ENCODE measurements at regions of chr15 and their contacts with region 1.

Region 1: DNA sequence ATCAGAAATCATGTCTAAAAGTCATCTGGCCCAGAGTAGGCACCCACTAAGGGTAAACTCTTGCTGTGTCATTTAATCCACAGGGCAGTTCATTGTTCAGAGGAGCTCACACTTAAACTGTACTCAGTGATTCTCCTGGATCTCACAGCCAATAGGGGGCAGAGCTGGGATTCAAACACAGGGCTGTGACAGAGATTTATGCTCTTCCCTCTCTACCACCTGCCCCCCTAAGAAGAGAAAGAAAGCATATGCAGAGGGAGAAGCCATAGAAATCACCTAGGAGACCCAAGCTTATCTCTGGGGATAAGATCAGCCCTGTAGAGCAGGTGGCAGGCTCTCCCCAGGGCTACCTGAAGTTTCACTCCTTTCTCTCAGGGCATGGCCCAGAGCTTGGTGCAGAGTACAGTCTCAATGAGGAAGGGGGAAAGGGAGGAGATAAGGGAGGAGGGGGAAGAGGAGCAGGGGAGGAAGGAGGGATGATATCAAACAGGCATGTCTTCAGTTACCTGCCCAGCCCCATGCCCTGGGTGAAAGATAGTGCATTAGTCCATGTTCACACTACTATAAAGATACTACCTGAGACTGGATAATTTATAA is 51.8 kb upstream of the ADPGK start:
- DNase-seq: peak in 1 of 2 donors; percentile 39
- ATAC-seq: peak in 1 of 2 donors; percentile 24
- H3K4me3 ChIP-seq: no peak overlapping the region
- H3K27ac ChIP-seq: peak overlapping the region; percentile 84 to 93 (median 89)
- H3K4me1 ChIP-seq: peaks cover 28 to 57% of the 10 kb centered on the region in 2 donors
- H3K27me3 ChIP-seq: no peaks in the 10 kb centered on the region
- CTCF ChIP-seq: peak in 4 of 5 experiments; percentile 23 to 50 (median 38)
- POLR2A ChIP-seq: no peak

Region 2: DNA sequence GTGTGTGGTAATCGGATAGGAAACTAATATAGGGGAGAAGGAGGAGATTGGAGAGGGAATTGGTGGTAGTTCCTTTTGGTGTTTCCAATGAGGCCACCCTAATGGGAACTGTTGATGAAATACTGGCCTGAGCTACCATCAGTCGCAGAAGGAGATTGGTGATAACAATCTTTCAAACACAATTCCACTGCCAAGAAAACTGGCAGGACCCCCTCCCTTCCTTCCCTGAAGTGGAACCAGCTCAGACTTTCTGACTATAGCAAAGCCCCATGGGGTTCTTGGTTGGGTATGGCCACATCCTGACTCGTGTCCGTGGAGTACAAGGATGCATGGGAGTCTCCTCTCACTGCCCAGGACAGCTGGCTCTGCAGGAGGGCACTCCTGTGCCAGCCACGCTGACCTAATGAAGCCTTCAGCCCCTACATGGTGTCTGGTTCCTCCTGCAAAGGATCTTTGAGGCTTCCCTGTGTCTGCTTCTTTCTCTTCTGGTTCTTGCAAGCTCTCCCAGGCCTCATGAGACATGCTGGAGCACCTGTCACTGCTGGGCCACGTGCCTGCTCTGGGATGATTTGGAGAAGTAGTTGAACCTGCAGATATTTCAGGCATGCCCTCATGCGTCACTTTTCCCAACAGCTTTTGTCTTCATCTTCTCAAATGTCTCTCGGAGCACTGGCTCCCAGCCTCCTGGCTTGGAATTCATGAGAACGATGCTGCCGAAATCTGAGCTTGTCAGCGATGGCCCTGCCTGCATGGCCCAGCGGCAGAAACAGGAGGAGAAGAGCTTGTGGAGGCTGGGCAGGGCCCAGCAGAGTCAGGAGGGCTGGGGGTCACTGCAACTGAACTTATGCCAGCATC is 38.2 kb after region 1 on chr15:
- in situ Hi-C with region 1: loop called in 1 of 4 experiments (anchors 5 kb)
- intact Hi-C with region 1: loop called (anchors 1 kb)
- DNase-seq: peak; percentile 94 to 99
- ATAC-seq: peak; percentile 82 to 84
- H3K4me3 ChIP-seq: peak overlapping the region in 1 of 4 donors; percentile 1
- H3K27ac ChIP-seq: peak overlapping the region; percentile 87 to 93 (median 90)
- H3K4me1 ChIP-seq: peaks cover 56 to 62% of the 10 kb centered on the region in 2 donors
- H3K27me3 ChIP-seq: no peaks in the 10 kb centered on the region
- CTCF ChIP-seq: no peak
- POLR2A ChIP-seq: peak; percentile 32 to 42

Region 3: DNA sequence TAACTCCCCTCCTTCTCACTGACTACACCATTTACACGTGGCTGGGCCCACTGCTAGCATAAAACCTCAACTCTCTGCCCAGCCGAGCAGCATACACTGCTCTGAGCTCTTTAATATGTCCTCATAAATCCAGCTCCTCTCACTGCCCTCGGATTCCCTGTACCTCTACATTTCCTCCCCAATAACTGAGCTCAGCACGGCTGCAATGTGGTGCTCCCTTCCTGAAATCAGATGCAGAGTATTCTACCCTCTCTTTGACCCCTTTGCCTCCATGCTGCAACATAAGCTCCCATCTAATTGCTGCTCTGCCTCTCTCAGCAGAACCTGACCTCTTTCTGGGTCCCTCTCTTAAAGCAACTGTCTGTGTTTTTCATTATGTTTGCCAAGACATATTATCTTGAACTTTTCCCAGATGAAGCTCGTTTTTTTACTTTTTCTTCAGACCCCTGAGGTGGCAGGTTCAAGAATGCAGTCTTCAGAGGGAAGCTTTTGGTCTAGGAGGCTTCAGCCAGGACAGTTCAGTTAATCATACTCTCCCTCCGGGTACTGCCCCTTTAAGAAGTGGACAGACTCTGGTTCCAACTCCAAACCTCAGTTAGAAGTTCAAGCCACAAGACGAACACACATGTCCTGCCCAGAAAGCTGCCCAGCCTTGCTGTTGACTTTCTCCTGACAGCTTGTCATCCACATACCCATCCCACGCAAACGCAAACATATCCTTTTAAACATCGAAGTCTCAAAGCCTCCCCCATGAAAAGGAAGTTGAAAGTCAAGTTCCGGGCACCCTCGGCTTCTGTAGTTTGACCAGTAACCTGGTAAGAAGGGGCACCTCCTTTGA is 135.8 kb after region 1 on chr15:
- in situ Hi-C with region 1: no loop called
- intact Hi-C with region 1: loop called (anchors 5 kb)
- DNase-seq: no peak
- ATAC-seq: peak; percentile 79 to 87
- H3K4me3 ChIP-seq: peak overlapping the region; percentile 36 to 54 (median 46)
- H3K27ac ChIP-seq: peak overlapping the region; percentile 71 to 80 (median 74)
- H3K4me1 ChIP-seq: peaks cover 32 to 42% of the 10 kb centered on the region in 2 donors
- H3K27me3 ChIP-seq: no peaks in the 10 kb centered on the region
- CTCF ChIP-seq: no peak
- POLR2A ChIP-seq: no peak

Region 4: DNA sequence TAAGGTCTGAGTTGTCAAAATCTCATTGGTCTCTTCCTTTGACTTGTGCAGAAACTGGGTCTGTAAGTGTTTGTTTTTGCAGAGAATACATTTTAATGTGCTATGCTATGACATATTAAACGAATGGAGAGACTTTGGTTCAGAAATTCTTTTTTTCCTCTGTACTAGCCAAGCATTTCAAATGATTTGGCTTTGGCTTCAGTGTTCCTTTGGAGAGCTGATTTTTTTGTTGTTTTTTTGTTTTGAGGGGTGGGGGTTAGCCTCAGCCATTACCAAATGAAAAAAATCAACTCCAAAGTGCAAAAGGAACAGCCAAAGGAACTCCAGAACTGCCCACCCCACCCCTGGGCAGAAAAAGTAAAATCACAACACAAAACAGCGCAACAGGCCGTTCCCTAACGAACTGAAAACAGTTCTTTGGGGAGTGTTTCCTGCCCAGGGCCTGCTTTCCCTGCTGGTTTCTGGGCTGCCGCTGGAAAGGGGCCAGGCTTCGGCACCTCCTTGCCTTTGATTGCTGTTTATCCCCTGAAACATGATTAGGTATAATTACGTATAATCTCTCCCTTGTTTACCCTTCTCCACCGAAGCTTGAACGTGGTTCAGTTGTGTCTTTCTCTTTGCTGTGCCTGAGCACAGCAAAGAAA is 159.3 kb after region 1 on chr15:
- in situ Hi-C with region 1: no loop called
- intact Hi-C with region 1: loop called (anchors 5 kb)
- DNase-seq: no peak
- ATAC-seq: no peak
- H3K4me3 ChIP-seq: no peak overlapping the region
- H3K27ac ChIP-seq: no peak overlapping the region
- H3K4me1 ChIP-seq: peaks cover 10 to 23% of the 10 kb centered on the region in 2 donors
- H3K27me3 ChIP-seq: no peaks in the 10 kb centered on the region
- CTCF ChIP-seq: no peak
- POLR2A ChIP-seq: no peak

Region 5: GRCh38 chr15:73051811-73052678 is 216.7 kb after region 1 on chr15 and contains the start of gene NEO1:
- in situ Hi-C with region 1: no loop called
- intact Hi-C with region 1: loop called (anchors 1 kb)
- DNase-seq: peak; percentile 81 to 89
- ATAC-seq: peak; percentile 72 to 77
- H3K4me3 ChIP-seq: peak within 1 kb of the TSS; percentile 93 to 99 (median 97)
- H3K27ac ChIP-seq: peak within 1 kb of the TSS; percentile 98 to 99 (median 98)
- H3K4me1 ChIP-seq: peaks cover 16 to 40% of the 10 kb centered on the region in 2 donors
- H3K27me3 ChIP-seq: no peaks in the 10 kb centered on the region
- CTCF ChIP-seq: no peak
- POLR2A ChIP-seq: peak; percentile 51 to 61
- total RNA-seq, gene NEO1: 13.8 to 32.0 (median 20.3) TPM